SK-N-SH (cell line): ENCODE measurements at regions of chr21 and their contacts with region 1.

Region 1: GRCh38 chr21:36630485-36631206 is 68.3 kb upstream of the SIM2 start:
- DNase-seq: peak; percentile 67
- H3K4me3 ChIP-seq: no peak overlapping the region; a peak in 1 of 4 replicates
- H3K27ac ChIP-seq: no peak overlapping the region
- H3K4me1 ChIP-seq: peaks cover 0 to 12% of the 10 kb centered on the region in 2 experiments; a peak in 1 of 4 replicates
- H3K27me3 ChIP-seq: peaks cover 36% of the 10 kb centered on the region
- CTCF ChIP-seq: peak; percentile 75
- EP300 ChIP-seq: no peak
- RAD21 ChIP-seq: peak; percentile 53

Region 2: GRCh38 chr21:36640721-36641244 is 10.1 kb after region 1 on chr21:
- CTCF ChIA-PET with region 1: interaction called, 15 read pairs
- POLR2A ChIA-PET with region 1: no interaction called
- DNase-seq: no peak
- H3K4me3 ChIP-seq: no peak overlapping the region
- H3K27ac ChIP-seq: no peak overlapping the region
- H3K4me1 ChIP-seq: no peaks in the 10 kb centered on the region; a peak in 1 of 4 replicates
- H3K27me3 ChIP-seq: peaks cover 33% of the 10 kb centered on the region; the same call in 1 of the 2 replicates
- CTCF ChIP-seq: no peak
- EP300 ChIP-seq: no peak
- RAD21 ChIP-seq: no peak

Region 3: DNA sequence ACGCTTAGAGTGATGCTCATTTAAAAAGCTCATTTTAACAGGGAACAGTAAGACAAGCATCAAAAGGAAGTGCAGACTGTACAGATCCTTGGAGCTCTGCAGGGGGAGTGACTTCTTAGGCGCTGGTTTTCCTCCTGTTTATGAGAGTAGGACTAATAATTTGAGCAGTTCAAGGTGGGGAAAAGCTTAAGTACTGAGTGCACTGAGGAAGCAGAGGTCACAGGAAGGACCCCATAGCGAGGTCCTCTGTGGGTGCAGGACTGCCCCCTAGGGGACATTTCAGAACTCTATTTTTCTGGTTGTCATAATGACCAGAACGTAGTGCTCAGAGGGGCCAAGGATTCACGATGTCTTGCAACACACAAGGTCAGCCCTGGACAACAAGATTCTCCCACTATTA is 223.7 kb after region 1 on chr21:
- CTCF ChIA-PET with region 1: interaction called, 12 read pairs
- POLR2A ChIA-PET with region 1: no interaction called
- DNase-seq: peak; percentile 68
- H3K4me3 ChIP-seq: no peak overlapping the region; a peak in 1 of 4 replicates
- H3K27ac ChIP-seq: no peak overlapping the region
- H3K4me1 ChIP-seq: peaks cover 6% of the 10 kb centered on the region in 2 experiments; a peak in 2 of 4 replicates
- H3K27me3 ChIP-seq: no peaks in the 10 kb centered on the region
- CTCF ChIP-seq: peak; percentile 71
- EP300 ChIP-seq: no peak
- RAD21 ChIP-seq: peak; percentile 71